K562 (cell line): ENCODE measurements at regions of chr12 and their contacts with region 1.

Region 1: GRCh38 chr12:8108808-8109398 is 14.5 kb upstream of the CLEC4A start:
- DNase-seq: peak; percentile 50 to 75 (median 57)
- ATAC-seq: peak; percentile 75
- H3K4me3 ChIP-seq: no peak overlapping the region
- H3K27ac ChIP-seq: no peak overlapping the region
- H3K4me1 ChIP-seq: no peaks in the 10 kb centered on the region
- H3K27me3 ChIP-seq: no peaks in the 10 kb centered on the region
- CTCF ChIP-seq: peak; percentile 85 to 94 (median 94)
- EP300 ChIP-seq: no peak
- POLR2A ChIP-seq: no peak
- RAD21 ChIP-seq: peak; percentile 91 to 94

Region 2: GRCh38 chr12:8226355-8226754 is 117.5 kb after region 1 on chr12:
- CTCF ChIA-PET with region 1: interaction called, 3 read pairs
- POLR2A ChIA-PET with region 1: no interaction called
- in situ Hi-C with region 1: loop called (anchors 5 kb)
- intact Hi-C with region 1: no loop called
- DNase-seq: no peak
- ATAC-seq: no peak
- H3K4me3 ChIP-seq: no peak overlapping the region
- H3K27ac ChIP-seq: no peak overlapping the region
- H3K4me1 ChIP-seq: peaks cover 2 to 13% of the 10 kb centered on the region in 2 experiments; a peak in 2 of 5 replicates
- H3K27me3 ChIP-seq: peaks cover 3 to 17% of the 10 kb centered on the region in 2 experiments; a peak in 2 of 5 replicates
- CTCF ChIP-seq: no peak
- EP300 ChIP-seq: no peak
- POLR2A ChIP-seq: no peak
- RAD21 ChIP-seq: no peak